Activated CD8-positive, alpha-beta T cell treated with anti-CD3 and anti-CD28 coated beads for 36 hours (primary cell): ENCODE measurements at regions of chr12 and their contacts with region 1.

Region 1: GRCh38 chr12:120228291-120229070 is 27.6 kb upstream of the RPLP0 start:
- DNase-seq: peak; percentile 92
- ATAC-seq: peak; percentile 72
- H3K4me3 Mint-ChIP-seq: peak overlapping the region; percentile 0
- H3K27ac Mint-ChIP-seq: peak overlapping the region; percentile 36
- H3K4me1 Mint-ChIP-seq: peaks cover 77% of the 10 kb centered on the region
- H3K27me3 Mint-ChIP-seq: no peaks in the 10 kb centered on the region
- CTCF ChIP-seq: peak; percentile 83

Region 2: GRCh38 chr12:120075034-120075616 is 153.4 kb before region 1 on chr12:
- CTCF ChIA-PET with region 1: no interaction called
- POLR2A ChIA-PET with region 1: no interaction called
- intact Hi-C with region 1: no loop called
- DNase-seq: no peak
- ATAC-seq: no peak
- H3K4me3 Mint-ChIP-seq: no peak overlapping the region
- H3K27ac Mint-ChIP-seq: peak overlapping the region; percentile 60
- H3K4me1 Mint-ChIP-seq: peaks cover 22% of the 10 kb centered on the region
- H3K27me3 Mint-ChIP-seq: no peaks in the 10 kb centered on the region
- CTCF ChIP-seq: no peak

Region 3: GRCh38 chr12:120216742-120217605 is 11.5 kb before region 1 on chr12:
- CTCF ChIA-PET with region 1: interaction called, 34 read pairs
- POLR2A ChIA-PET with region 1: interaction called, 8 read pairs
- intact Hi-C with region 1: no loop called
- DNase-seq: no peak
- ATAC-seq: no peak
- H3K4me3 Mint-ChIP-seq: no peak overlapping the region
- H3K27ac Mint-ChIP-seq: no peak overlapping the region
- H3K4me1 Mint-ChIP-seq: no peaks in the 10 kb centered on the region
- H3K27me3 Mint-ChIP-seq: no peaks in the 10 kb centered on the region
- CTCF ChIP-seq: no peak

Region 4: DNA sequence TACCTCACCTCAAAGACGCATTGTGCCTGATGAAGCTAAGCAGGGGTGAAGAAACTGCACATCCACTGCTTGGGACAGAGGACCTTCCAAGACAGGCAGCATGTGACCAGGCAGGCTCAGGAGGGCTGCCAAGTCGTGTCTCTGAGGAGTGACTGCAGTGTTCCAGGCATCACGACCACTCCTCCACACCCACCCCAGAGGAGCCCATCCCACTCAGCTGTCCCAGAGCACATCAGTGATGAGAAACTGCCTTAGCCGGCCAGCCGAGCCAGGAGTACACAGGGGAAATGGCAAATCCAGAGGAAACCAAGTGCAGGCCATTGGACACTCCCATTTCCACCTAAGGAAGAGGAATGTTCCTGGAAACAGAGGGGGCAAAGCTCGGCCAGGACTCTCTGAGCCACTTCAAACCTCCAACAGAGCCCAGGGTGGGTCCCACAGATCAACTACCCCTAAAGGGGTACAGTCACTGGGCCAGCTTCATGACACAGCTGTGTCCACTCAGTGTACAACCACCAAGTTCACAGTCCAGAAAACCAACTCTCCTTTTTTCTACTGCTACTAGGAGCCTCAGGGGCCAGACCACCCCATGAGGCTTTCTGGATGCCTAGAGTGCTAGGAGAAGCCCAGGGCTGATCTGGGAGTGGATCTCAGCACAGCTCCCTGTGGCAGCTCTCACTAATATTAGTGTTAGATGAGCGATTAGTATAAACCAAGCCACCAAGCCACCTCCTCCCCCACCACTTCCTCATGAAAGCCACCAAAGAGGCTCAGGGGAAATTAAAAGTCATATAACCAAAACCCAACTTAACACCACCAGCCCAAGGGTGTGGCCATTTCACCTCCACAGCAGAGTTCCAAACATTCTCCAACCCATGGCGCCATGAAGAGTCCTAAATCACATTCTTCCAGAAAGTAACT is 21.7 kb after region 1 on chr12:
- CTCF ChIA-PET with region 1: interaction called, 749 read pairs
- POLR2A ChIA-PET with region 1: interaction called, 31 read pairs
- intact Hi-C with region 1: loop called (anchors 1 kb)
- DNase-seq: peak; percentile 75
- ATAC-seq: peak; percentile 8
- H3K4me3 Mint-ChIP-seq: peak overlapping the region; percentile 6
- H3K27ac Mint-ChIP-seq: peak overlapping the region; percentile 34
- H3K4me1 Mint-ChIP-seq: peaks cover 75% of the 10 kb centered on the region
- H3K27me3 Mint-ChIP-seq: no peaks in the 10 kb centered on the region
- CTCF ChIP-seq: no peak

Region 5: GRCh38 chr12:120276734-120277133 is 48.3 kb after region 1 on chr12:
- CTCF ChIA-PET with region 1: interaction called, 749 read pairs
- POLR2A ChIA-PET with region 1: no interaction called
- intact Hi-C with region 1: no loop called
- DNase-seq: no peak
- ATAC-seq: no peak
- H3K4me3 Mint-ChIP-seq: no peak overlapping the region
- H3K27ac Mint-ChIP-seq: no peak overlapping the region
- H3K4me1 Mint-ChIP-seq: no peaks in the 10 kb centered on the region
- H3K27me3 Mint-ChIP-seq: no peaks in the 10 kb centered on the region
- CTCF ChIP-seq: no peak

Region 6: DNA sequence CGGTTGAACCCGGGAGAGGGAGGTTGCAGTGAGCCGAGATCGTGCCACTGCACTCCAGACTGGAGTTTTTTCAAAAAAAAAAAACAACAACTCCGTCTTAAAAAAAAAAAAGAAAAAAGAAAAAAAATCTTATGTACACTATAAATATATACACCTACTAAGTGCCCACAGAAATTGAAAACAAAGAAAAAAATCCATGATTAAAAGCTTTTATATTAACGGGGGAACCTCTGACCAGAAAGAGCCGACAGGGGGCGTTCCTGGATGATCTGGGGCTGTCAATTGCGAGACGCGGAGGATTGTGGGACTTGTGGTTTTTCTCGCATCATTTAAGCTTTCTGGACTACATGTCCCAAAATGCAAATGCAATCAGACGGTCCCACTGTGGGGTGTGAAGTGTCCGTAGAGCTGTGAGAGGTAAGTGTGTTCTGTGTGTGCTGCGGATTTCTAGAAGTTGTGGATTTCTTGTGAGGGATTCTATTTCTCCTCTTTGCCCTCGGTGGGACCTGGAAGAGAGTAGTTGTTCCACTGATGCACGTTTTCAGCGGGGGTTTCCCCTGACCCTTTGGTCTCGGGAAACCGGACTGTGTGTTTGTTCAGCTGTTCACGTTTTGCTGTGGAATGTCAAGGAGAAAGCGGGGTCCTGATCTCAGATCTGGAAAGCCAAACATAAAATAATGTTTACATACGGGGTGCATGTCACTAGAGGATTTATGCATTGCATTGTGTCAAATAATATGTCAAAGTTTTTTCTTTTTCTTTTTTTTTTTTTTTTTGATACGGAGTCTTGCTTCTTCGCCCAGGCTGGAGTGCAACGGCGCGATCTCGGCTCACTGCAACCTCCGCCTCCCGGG is 73.7 kb after region 1 on chr12 and contains the start of gene SIRT4:
- CTCF ChIA-PET with region 1: interaction called, 16 read pairs
- POLR2A ChIA-PET with region 1: no interaction called
- intact Hi-C with region 1: no loop called
- DNase-seq: peak; percentile 98
- ATAC-seq: peak; percentile 99
- H3K4me3 Mint-ChIP-seq: peak within 1 kb of the TSS; percentile 98
- H3K27ac Mint-ChIP-seq: peak within 1 kb of the TSS; percentile 91
- H3K4me1 Mint-ChIP-seq: peaks cover 8% of the 10 kb centered on the region
- H3K27me3 Mint-ChIP-seq: no peaks in the 10 kb centered on the region
- CTCF ChIP-seq: peak; percentile 66
- total RNA-seq, gene SIRT4: 2.7 to 3.3 TPM